ENCODE measurements at regions of chr11 and their contacts with region 1.

Region 1: DNA sequence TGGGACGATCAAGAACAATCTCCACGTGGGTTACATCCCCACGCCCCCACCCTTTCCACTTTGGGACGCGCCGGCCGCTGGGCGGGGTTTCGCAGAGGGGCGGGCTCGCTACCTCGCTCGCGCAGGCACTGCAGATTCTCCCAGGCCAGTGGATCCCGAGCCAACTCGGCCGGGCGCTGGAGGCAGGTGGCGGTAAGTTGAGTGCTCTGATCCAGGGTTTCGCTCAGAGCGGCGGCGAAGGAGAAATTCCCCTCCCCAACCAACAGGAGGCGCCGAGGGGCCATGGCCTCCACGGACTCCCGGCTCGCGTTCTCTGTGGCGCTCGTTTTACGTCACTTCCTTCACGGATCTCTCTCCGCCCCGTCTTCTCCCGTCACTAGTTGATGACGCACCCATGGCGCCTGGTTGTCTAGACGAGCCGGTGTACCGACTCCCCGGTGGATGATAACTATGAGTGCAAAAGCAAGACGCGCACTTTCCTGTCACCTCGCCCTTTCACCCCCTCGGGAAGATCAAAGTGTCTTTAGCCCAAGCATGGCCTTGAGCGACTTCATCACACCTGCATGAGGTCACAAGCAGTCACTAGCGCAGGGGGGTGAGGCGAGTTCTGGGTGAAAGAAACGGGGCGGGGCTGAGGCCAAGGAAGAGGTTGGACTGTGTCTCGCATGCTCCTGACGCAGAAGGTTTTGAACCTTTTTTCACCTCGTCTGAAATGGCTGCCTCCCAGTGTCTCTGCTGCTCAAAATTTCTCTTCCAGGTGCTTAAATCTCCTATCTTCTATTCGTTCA is at the starts of genes CFAP68 and FDXACB1:
- DNase-seq: peak; percentile 100
- H3K4me3 ChIP-seq: peak within 1 kb of the TSS; percentile 51
- H3K4me3 Mint-ChIP-seq: peak within 1 kb of the TSS; percentile 86
- H3K27ac Mint-ChIP-seq: peak within 1 kb of the TSS; percentile 97
- H3K4me1 ChIP-seq: peaks cover 6% of the 10 kb centered on the region; the same call in 1 of the 2 replicates
- H3K4me1 Mint-ChIP-seq: peaks cover 8% of the 10 kb centered on the region
- H3K27me3 ChIP-seq: no peaks in the 10 kb centered on the region
- H3K27me3 Mint-ChIP-seq: no peaks in the 10 kb centered on the region
- CTCF ChIP-seq: peak; percentile 99
- total RNA-seq, gene CFAP68: 69.8 and 71.4 TPM in 2 replicates
- total RNA-seq, gene FDXACB1: 4.3 and 4.7 TPM in 2 replicates

Region 2: GRCh38 chr11:111918390-111919258 is 39.6 kb after region 1 on chr11 and contains the start of gene C11orf52:
- CTCF ChIA-PET with region 1: interaction called, 7 read pairs
- POLR2A ChIA-PET with region 1: interaction called, 5 read pairs
- intact Hi-C with region 1: loop called (anchors 1 kb)
- DNase-seq: peak; percentile 92 to 94
- H3K4me3 ChIP-seq: peak within 1 kb of the TSS; percentile 49
- H3K4me3 Mint-ChIP-seq: peak within 1 kb of the TSS; percentile 79
- H3K27ac Mint-ChIP-seq: peak within 1 kb of the TSS; percentile 94
- H3K4me1 ChIP-seq: peaks cover 12% of the 10 kb centered on the region
- H3K4me1 Mint-ChIP-seq: peaks cover 21% of the 10 kb centered on the region
- H3K27me3 ChIP-seq: no peaks in the 10 kb centered on the region
- H3K27me3 Mint-ChIP-seq: no peaks in the 10 kb centered on the region
- CTCF ChIP-seq: peak; percentile 42 to 48
- total RNA-seq, gene C11orf52: 14.4 and 14.8 TPM in 2 replicates

Region 3: GRCh38 chr11:111992206-111992855 is 113.3 kb after region 1 on chr11:
- CTCF ChIA-PET with region 1: interaction called, 6 read pairs
- POLR2A ChIA-PET with region 1: no interaction called
- intact Hi-C with region 1: loop called (anchors 1 kb)
- DNase-seq: no peak
- H3K4me3 ChIP-seq: no peak overlapping the region
- H3K4me3 Mint-ChIP-seq: no peak overlapping the region
- H3K27ac Mint-ChIP-seq: no peak overlapping the region
- H3K4me1 ChIP-seq: peaks cover 14% of the 10 kb centered on the region
- H3K4me1 Mint-ChIP-seq: peaks cover 8% of the 10 kb centered on the region
- H3K27me3 ChIP-seq: no peaks in the 10 kb centered on the region
- H3K27me3 Mint-ChIP-seq: no peaks in the 10 kb centered on the region
- CTCF ChIP-seq: no peak

Region 4: GRCh38 chr11:112074026-112074811 is 195.2 kb after region 1 on chr11 and contains the start of gene NKAPD1:
- CTCF ChIA-PET with region 1: no interaction called
- POLR2A ChIA-PET with region 1: no interaction called
- intact Hi-C with region 1: loop called (anchors 2 kb)
- DNase-seq: peak; percentile 89 to 90
- H3K4me3 ChIP-seq: peak within 1 kb of the TSS; percentile 63
- H3K4me3 Mint-ChIP-seq: peak within 1 kb of the TSS; percentile 86
- H3K27ac Mint-ChIP-seq: peak within 1 kb of the TSS; percentile 98
- H3K4me1 ChIP-seq: no peaks in the 10 kb centered on the region
- H3K4me1 Mint-ChIP-seq: peaks cover 12% of the 10 kb centered on the region
- H3K27me3 ChIP-seq: no peaks in the 10 kb centered on the region
- H3K27me3 Mint-ChIP-seq: no peaks in the 10 kb centered on the region
- CTCF ChIP-seq: peak in 1 of 2 experiments; percentile 13
- total RNA-seq, gene NKAPD1: 36.9 and 37.4 TPM in 2 replicates

Region 5: GRCh38 chr11:112086422-112087191 is 207.6 kb after region 1 on chr11 and contains the starts of genes SDHD and TIMM8B:
- CTCF ChIA-PET with region 1: no interaction called
- POLR2A ChIA-PET with region 1: no interaction called
- intact Hi-C with region 1: loop called (anchors 1 kb)
- DNase-seq: peak; percentile 99
- H3K4me3 ChIP-seq: peak within 1 kb of the TSS; percentile 59
- H3K4me3 Mint-ChIP-seq: peak within 1 kb of the TSS; percentile 95
- H3K27ac Mint-ChIP-seq: peak within 1 kb of the TSS; percentile 98
- H3K4me1 ChIP-seq: peaks cover 4% of the 10 kb centered on the region; the same call in 1 of the 2 replicates
- H3K4me1 Mint-ChIP-seq: peaks cover 17% of the 10 kb centered on the region
- H3K27me3 ChIP-seq: no peaks in the 10 kb centered on the region
- H3K27me3 Mint-ChIP-seq: no peaks in the 10 kb centered on the region
- CTCF ChIP-seq: peak in 1 of 2 experiments; percentile 73
- total RNA-seq, gene SDHD: 157 and 166 TPM in 2 replicates
- total RNA-seq, gene TIMM8B: 147 and 154 TPM in 2 replicates